PC-3 (cell line): ENCODE measurements at regions of chr10 and their contacts with region 1.

Region 1: GRCh38 chr10:71850637-71851464 is at the start of gene PSAP:
- DNase-seq: peak; percentile 97
- ATAC-seq: peak; percentile 91
- H3K4me3 ChIP-seq: peak within 1 kb of the TSS; percentile 94
- H3K27ac ChIP-seq: peak within 1 kb of the TSS; percentile 65
- H3K4me1 ChIP-seq: peaks cover 22% of the 10 kb centered on the region; the same call in 1 of the 2 replicates
- H3K27me3 ChIP-seq: no peaks in the 10 kb centered on the region
- CTCF ChIP-seq: no peak
- total RNA-seq, gene PSAP: 334 and 342 TPM in 2 replicates

Region 2: DNA sequence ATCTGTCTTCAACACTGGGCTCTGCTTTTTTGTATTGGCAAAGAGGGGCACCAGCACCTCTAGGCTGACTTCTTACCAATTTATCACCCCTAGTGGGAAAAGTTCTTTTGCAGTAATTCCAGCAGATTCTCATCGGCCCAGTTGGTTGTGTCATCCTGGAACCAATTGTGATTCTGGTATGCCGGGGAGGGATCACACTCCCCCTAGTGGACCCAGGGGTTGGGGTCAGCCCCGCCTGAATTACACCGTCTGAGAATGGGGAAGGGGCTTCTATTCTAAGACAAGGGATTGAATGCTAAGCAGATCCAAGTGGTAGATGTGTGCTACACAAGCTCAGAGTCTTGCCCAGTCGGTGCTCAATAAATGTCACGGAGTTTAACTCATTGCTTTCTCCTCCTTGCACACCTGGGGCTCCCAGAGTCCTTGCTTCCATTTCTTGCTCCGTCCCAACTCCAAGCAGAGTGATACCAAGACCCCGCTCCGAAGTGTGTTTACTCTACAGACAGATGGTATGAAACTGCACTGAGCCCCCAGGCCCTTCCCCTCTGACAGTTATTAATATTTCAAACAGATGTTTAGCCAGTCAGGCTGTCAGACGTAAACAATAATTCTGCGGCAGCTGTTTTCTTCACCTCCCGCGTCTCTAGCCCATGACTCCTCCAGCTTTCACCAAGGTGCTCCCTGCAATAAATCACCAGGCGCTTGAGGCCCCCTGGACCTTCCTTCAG is 203.2 kb before region 1 on chr10:
- CTCF ChIA-PET with region 1: no interaction called
- POLR2A ChIA-PET with region 1: no interaction called
- intact Hi-C with region 1: no loop called
- DNase-seq: no peak
- ATAC-seq: no peak
- H3K4me3 ChIP-seq: no peak overlapping the region
- H3K27ac ChIP-seq: no peak overlapping the region
- H3K4me1 ChIP-seq: no peaks in the 10 kb centered on the region
- H3K27me3 ChIP-seq: no peaks in the 10 kb centered on the region
- CTCF ChIP-seq: peak; percentile 49

Region 3: DNA sequence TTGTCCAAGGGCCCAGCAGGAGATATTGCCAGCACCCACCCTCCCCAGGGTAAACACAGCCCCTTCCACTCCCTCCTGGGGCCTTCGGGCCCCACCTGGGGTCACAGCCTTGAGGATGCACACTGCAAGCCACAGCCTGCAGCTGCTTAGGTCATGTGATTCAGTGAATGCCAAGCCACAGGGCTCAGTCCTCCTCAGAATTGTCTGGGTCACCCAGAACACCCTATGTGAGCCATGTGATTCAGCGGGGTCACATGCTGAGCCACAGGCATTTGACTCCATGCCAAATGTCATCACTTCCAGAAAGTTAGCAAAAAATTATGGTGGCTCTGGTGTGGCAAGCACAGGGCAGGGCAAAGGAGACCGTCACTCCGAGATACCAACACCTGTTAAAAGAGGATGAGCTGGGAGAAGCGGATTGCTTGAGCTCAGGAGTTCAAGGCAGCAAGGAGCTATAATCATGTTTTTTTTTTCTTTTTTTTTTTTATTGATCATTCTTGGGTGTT is 17.4 kb after region 1 on chr10:
- CTCF ChIA-PET with region 1: interaction called, 3 read pairs
- POLR2A ChIA-PET with region 1: interaction called, 6 read pairs
- intact Hi-C with region 1: loop called (anchors 1 kb)
- DNase-seq: peak; percentile 43
- ATAC-seq: 0 out of 2 replicates have a peak, but pooled peaks have one; percentile 13
- H3K4me3 ChIP-seq: no peak overlapping the region
- H3K27ac ChIP-seq: no peak overlapping the region
- H3K4me1 ChIP-seq: peaks cover 12% of the 10 kb centered on the region; the same call in 1 of the 2 replicates
- H3K27me3 ChIP-seq: no peaks in the 10 kb centered on the region
- CTCF ChIP-seq: no peak

Region 4: GRCh38 chr10:71888623-71889387 is 38.0 kb after region 1 on chr10:
- CTCF ChIA-PET with region 1: no interaction called
- POLR2A ChIA-PET with region 1: no interaction called
- intact Hi-C with region 1: loop called (anchors 5 kb)
- DNase-seq: peak; percentile 42
- ATAC-seq: peak; percentile 78
- H3K4me3 ChIP-seq: peak overlapping the region; percentile 85
- H3K27ac ChIP-seq: peak overlapping the region; percentile 45
- H3K4me1 ChIP-seq: peaks cover 5% of the 10 kb centered on the region
- H3K27me3 ChIP-seq: no peaks in the 10 kb centered on the region
- CTCF ChIP-seq: peak; percentile 22; the same call in 1 of the 2 replicates

Region 5: DNA sequence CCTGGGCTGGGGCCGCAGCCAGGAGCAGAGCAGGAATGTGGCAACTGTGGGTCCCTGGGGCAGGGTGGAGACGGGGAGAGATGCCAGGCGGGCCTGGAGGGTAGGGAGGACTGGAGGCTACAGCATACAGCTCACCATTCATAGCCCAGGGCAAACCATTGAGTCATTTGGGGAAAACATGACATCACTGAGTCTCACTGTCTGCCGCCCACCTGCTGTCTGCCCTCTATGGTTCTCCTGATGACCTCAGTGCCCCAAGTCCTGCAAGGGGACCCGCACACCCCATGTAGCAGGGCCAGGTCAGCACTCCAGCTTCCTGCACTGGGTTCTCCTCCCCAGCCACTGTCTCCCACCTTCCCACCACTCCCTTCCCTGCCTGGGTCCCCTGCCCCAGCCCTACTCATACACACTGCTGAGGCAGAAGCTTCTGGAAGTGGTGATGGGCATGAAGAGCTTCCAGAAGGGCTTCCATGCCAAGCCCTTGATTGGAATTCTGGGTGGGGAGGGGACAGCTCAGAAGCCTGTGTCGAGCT is 123.7 kb after region 1 on chr10:
- CTCF ChIA-PET with region 1: no interaction called
- POLR2A ChIA-PET with region 1: no interaction called
- intact Hi-C with region 1: no loop called
- DNase-seq: peak; percentile 73
- ATAC-seq: peak; percentile 11
- H3K4me3 ChIP-seq: no peak overlapping the region
- H3K27ac ChIP-seq: peak overlapping the region; percentile 89
- H3K4me1 ChIP-seq: peaks cover 76% of the 10 kb centered on the region
- H3K27me3 ChIP-seq: no peaks in the 10 kb centered on the region
- CTCF ChIP-seq: no peak